Calu3 (cell line): ENCODE measurements at regions of chr7 and their contacts with region 1.

Region 1: DNA sequence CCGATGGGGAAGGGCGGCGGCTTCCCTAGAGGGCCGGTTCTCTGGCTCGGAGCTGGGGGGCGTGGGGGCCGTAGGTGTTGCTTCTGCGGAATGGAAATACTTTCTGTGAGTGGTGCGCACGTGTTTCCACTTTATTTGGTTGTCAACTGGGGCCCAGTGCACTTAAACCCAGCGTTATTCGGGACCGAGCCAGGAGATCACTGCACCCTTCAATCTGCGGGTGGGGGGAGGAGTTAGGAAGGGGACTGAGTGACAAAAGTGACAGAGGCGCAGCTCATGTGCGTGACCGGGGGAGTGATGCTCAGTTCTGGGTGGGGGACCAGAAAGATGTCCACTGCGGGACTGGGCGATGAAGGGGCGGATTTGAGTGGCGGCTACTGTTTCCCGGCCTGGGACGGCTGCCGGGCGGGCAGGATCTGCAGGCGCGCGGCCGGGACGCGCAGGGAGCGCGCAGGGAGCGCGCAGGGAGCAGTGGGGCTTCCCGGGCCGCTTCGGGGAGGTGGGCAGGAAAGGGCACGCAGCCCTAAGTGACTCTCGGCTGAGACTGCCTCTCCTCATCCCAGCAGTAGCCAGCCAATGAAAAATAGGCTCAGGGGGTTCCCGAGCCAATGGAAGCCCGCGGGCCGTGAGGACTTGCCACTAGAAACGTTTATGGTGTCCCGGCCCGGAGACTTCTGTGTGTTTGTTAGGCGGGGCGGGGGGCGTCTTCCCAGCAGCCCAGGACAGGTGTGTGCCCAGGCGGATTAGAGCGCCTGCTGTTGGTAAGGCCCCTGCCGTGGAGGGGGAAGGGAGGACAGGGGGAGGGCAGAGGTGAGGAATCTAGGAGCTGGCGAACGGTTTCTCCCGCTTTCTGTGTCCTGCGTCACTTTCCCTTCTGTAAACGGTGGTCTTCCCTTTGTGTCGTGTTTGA is 54.3 kb upstream of the KDM7A start:
- DNase-seq: peak; percentile 50
- H3K4me3 Mint-ChIP-seq: peak overlapping the region; percentile 83
- H3K27ac Mint-ChIP-seq: peak overlapping the region; percentile 24
- H3K4me1 Mint-ChIP-seq: peaks cover 21% of the 10 kb centered on the region
- H3K27me3 Mint-ChIP-seq: peaks cover 12% of the 10 kb centered on the region
- CTCF ChIP-seq: no peak

Region 2: DNA sequence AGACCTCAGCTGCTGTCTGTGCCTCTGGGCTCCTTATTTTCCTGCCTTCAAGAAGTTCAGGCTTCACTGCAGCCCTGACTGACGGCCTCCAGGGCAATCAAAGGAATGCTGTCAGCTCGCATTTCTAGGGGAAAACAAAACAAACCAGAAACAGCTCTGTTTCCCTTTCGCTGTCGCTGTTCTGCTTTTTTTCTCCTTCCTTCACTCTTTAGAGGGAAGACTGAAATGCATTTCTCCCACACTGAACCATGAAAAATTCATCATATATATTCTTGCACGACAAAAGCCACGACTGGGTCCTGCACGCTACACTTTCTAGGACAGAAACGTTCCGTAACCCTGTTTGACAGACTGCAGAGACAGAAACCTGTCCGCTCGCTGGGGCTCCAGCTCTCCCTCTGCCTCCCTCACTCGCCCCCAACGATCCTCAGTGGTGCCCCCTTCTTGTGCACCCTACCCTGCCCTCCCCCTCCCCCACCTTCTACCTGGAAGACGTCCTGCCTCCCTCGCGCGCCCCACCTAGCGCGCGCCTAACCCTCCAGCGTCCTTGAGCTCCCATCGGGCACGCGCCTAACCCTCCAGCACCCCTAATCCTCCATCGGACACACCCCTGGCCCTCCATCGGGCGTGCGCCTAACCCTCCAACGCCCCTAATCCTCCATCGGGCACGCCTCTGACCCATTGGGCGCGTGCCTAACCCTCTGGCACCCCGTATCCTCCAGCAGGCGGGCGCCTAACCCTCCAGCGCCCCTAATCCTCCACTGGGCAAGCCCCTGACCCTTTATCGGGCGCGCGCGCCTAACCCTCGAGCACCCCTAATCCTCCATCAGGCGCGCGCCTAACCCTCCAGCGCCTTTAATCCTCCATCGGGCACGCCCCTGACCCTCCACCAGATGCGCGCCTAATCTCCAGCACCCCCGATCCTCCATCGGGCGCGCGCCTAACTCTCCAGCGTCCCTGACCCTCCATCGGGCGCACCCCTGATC is 1567.1 kb before region 1 on chr7:
- CTCF ChIA-PET with region 1: no interaction called
- intact Hi-C with region 1: no loop called
- DNase-seq: peak; percentile 38
- H3K4me3 Mint-ChIP-seq: peak overlapping the region; percentile 86
- H3K27ac Mint-ChIP-seq: peak overlapping the region; percentile 58
- H3K4me1 Mint-ChIP-seq: peaks cover 17% of the 10 kb centered on the region
- H3K27me3 Mint-ChIP-seq: no peaks in the 10 kb centered on the region
- CTCF ChIP-seq: no peak

Region 3: GRCh38 chr7:140062528-140063299 is 168.4 kb before region 1 on chr7 and contains the start of gene PARP12:
- CTCF ChIA-PET with region 1: no interaction called
- intact Hi-C with region 1: loop called (anchors 5 kb)
- DNase-seq: peak; percentile 92
- H3K4me3 Mint-ChIP-seq: peak within 1 kb of the TSS; percentile 55
- H3K27ac Mint-ChIP-seq: peak within 1 kb of the TSS; percentile 55
- H3K4me1 Mint-ChIP-seq: peaks cover 37% of the 10 kb centered on the region
- H3K27me3 Mint-ChIP-seq: no peaks in the 10 kb centered on the region
- CTCF ChIP-seq: no peak
- total RNA-seq, gene PARP12: 66.6 and 102 TPM in 2 replicates

Region 4: GRCh38 chr7:140175221-140176121 is 55.6 kb before region 1 on chr7:
- CTCF ChIA-PET with region 1: no interaction called
- intact Hi-C with region 1: loop called (anchors 5 kb)
- DNase-seq: peak; percentile 79
- H3K4me3 Mint-ChIP-seq: peak overlapping the region; percentile 75
- H3K27ac Mint-ChIP-seq: no peak overlapping the region
- H3K4me1 Mint-ChIP-seq: peaks cover 15% of the 10 kb centered on the region
- H3K27me3 Mint-ChIP-seq: peaks cover 23% of the 10 kb centered on the region
- CTCF ChIP-seq: peak; percentile 44

Region 5: DNA sequence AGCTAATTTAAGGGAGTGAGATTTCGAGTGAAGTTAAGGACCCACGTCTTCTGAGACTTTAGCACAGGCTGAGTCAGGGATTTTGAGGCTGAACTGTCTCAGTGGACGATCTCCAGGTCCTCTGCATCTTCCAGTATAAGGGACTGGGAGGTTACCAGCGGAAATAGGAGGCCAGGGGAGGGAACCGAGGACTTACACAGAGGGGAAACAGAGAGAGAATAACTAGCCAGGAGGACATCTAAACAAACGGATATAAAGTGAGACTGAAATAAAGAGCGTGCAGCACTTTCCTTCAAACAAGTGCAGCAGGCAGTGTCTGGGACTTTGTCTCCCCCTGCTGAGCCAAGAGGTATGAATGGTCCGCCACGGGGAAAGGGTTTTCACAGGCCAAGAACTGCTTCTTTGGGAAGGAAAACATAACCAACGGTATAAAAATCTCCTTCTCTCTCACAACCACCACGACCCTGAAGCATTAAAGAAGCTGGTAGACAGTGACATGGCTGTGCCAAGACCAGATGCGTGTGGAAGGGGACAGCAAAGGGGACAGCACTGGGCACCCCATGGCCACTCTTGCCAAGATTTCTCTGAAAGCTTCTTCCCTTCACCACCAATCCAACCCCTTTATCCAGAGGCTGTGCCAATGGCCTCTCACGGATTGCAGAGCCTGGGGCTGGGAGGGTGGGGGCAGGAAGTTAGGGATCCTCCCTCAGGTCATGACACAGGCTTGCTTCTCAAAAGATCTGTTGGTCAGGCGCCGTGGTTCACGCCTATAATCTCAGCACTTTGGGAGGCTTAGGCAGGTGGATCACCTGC is 95.2 kb after region 1 on chr7:
- CTCF ChIA-PET with region 1: no interaction called
- intact Hi-C with region 1: loop called (anchors 5 kb)
- DNase-seq: peak; percentile 55
- H3K4me3 Mint-ChIP-seq: no peak overlapping the region
- H3K27ac Mint-ChIP-seq: no peak overlapping the region
- H3K4me1 Mint-ChIP-seq: no peaks in the 10 kb centered on the region
- H3K27me3 Mint-ChIP-seq: no peaks in the 10 kb centered on the region
- CTCF ChIP-seq: peak; percentile 57